ENCODE measurements at regions of chr13 and their contacts with region 1.

Region 1: GRCh38 chr13:98672944-98673545 is 79.4 kb downstream of the SLC15A1 start:
- DNase-seq: peak; percentile 67
- H3K4me3 ChIP-seq: no peak overlapping the region
- H3K27ac ChIP-seq: no peak overlapping the region
- H3K4me1 ChIP-seq: no peaks in the 10 kb centered on the region
- H3K27me3 ChIP-seq: peaks cover 6% of the 10 kb centered on the region in 2 experiments
- CTCF ChIP-seq: peak; percentile 77 to 78
- POLR2A ChIP-seq: no peak

Region 2: GRCh38 chr13:98022210-98022609 is 650.8 kb before region 1 on chr13:
- CTCF ChIA-PET with region 1: interaction called, 12 read pairs
- POLR2A ChIA-PET with region 1: no interaction called
- dilution Hi-C with region 1: no loop called
- intact Hi-C with region 1: no loop called
- DNase-seq: peak; percentile 13
- H3K4me3 ChIP-seq: no peak overlapping the region
- H3K27ac ChIP-seq: no peak overlapping the region
- H3K4me1 ChIP-seq: peaks cover 4% of the 10 kb centered on the region
- H3K27me3 ChIP-seq: no peaks in the 10 kb centered on the region
- CTCF ChIP-seq: no peak
- POLR2A ChIP-seq: no peak

Region 3: GRCh38 chr13:98142380-98143156 is 530.5 kb before region 1 on chr13 and contains the start of gene FARP1:
- CTCF ChIA-PET with region 1: interaction called, 9 read pairs
- POLR2A ChIA-PET with region 1: no interaction called
- dilution Hi-C with region 1: no loop called
- intact Hi-C with region 1: loop called (anchors 2 kb)
- DNase-seq: peak; percentile 55
- H3K4me3 ChIP-seq: peak within 1 kb of the TSS; percentile 76 to 88 (median 81)
- H3K27ac ChIP-seq: peak within 1 kb of the TSS; percentile 30
- H3K4me1 ChIP-seq: peaks cover 12% of the 10 kb centered on the region
- H3K27me3 ChIP-seq: peaks cover 7 to 9% of the 10 kb centered on the region in 2 experiments
- CTCF ChIP-seq: peak; percentile 19 to 32
- POLR2A ChIP-seq: no peak
- total RNA-seq, gene FARP1: 73.5 and 77.7 TPM in 2 replicates

Region 4: GRCh38 chr13:98454389-98454881 is 218.6 kb before region 1 on chr13:
- CTCF ChIA-PET with region 1: interaction called, 12 read pairs
- POLR2A ChIA-PET with region 1: no interaction called
- dilution Hi-C with region 1: loop called (anchors 25 kb)
- intact Hi-C with region 1: no loop called
- DNase-seq: peak; percentile 44
- H3K4me3 ChIP-seq: no peak overlapping the region
- H3K27ac ChIP-seq: no peak overlapping the region
- H3K4me1 ChIP-seq: no peaks in the 10 kb centered on the region
- H3K27me3 ChIP-seq: no peaks in the 10 kb centered on the region
- CTCF ChIP-seq: no peak
- POLR2A ChIP-seq: no peak

Region 5: DNA sequence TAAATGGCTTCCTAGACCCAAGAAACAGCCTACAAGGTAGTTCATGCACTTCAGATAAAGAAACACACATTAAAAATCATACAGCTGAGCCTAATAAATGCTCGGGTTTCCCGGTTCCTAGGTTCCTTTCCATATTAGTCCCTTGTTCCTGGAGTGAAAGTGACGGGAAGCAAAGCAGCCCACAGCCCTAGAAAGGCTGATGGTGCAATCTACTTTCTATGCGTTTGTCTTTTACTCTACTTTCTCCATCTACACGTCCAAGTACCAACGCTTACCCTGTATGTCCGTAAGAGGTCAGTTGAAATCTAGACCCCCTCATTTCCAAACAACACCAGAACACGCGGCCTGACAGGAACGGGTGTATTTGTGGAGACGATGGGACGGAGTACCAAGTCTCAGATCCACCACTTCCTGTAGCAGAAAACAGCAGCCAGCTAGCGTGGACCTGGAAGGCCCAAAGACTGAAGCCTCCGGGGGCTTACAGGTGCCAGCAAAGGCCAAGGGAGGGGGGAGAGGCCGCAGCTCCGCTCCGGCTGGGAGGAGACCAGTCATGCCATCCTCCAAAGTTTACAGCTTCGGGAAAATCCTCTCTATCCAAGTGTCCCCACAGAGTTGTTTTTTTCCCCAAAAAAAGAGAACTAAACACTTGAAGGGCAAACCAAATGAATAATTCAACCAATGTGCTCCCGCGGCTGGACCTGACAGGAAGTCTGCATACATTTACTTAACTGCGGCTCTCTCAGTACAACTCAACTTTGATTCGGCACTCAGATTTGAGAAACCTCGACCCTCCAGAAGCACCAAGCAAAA is 130.3 kb before region 1 on chr13:
- CTCF ChIA-PET with region 1: interaction called, 11 read pairs
- POLR2A ChIA-PET with region 1: no interaction called
- dilution Hi-C with region 1: no loop called
- intact Hi-C with region 1: no loop called
- DNase-seq: no peak
- H3K4me3 ChIP-seq: no peak overlapping the region
- H3K27ac ChIP-seq: no peak overlapping the region
- H3K4me1 ChIP-seq: peaks cover 15% of the 10 kb centered on the region
- H3K27me3 ChIP-seq: no peaks in the 10 kb centered on the region
- CTCF ChIP-seq: no peak
- POLR2A ChIP-seq: no peak

Region 6: DNA sequence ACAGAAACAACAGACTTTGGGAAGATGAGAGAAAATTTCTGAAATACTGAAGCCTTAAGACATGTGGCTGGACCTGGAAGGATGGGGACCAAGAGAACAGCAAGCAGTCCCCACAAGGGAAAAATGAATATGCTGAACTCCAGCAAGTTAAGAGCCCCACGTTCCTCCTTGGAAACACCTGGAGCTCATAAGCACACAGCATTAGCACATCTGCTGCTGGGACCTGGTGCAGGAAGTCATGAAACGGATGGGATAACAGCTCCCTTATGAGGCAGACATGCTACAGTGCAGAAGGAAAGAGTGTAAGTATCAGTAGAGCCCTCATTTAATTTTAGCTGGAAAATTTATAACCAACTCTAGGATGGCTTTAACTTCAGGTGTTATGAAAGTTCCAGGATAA is 12.1 kb after region 1 on chr13:
- CTCF ChIA-PET with region 1: interaction called, 20 read pairs
- POLR2A ChIA-PET with region 1: no interaction called
- dilution Hi-C with region 1: no loop called
- intact Hi-C with region 1: no loop called
- DNase-seq: no peak
- H3K4me3 ChIP-seq: no peak overlapping the region
- H3K27ac ChIP-seq: no peak overlapping the region
- H3K4me1 ChIP-seq: no peaks in the 10 kb centered on the region
- H3K27me3 ChIP-seq: peaks cover 6 to 9% of the 10 kb centered on the region in 2 experiments
- CTCF ChIP-seq: no peak
- POLR2A ChIP-seq: no peak